Activated CD4-positive, alpha-beta memory T cell treated with anti-CD3 and anti-CD28 coated beads for 36 hours (primary cell): ENCODE measurements at regions of chr11 and their contacts with region 1.

Region 1: DNA sequence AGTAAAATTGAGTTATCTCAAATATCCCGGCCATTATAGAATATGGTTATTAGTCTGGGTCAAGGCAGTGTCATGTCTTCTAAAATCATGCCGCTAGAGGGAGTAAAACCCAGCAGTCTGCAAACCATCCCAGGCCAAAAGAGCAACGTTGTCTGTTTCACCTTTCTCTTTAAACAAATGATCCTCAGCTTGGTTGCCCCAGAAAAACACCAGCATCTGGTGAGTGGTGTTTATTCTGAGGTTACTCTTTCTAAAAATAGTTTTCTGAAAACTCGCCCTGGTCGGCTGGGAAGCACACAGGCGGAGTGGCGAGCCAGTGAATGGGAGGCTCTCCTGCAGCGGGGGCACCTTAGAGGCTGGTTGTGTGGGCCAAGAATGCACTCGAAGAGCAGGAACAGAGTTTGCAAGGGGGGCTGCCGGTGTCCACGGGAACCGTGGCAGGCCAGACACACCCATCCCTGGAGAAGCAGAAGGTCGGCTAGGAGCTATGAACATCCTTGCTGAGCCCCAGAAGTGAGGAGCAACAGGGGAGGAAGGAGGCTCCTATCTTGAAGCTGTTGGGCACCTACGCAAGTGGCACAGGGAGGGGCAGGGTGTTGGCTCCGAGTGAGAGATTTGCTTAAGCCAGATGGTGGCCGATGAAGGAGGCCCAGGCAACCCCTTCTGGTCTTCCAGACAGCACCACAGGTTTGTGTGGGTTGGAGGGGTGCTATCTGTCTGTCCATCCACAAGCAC is 297.1 kb downstream of the ETS1 start:
- DNase-seq: peak; percentile 80
- H3K4me3 Mint-ChIP-seq: peak overlapping the region; percentile 81
- H3K27ac Mint-ChIP-seq: peak overlapping the region; percentile 96
- H3K4me1 Mint-ChIP-seq: peaks cover 97% of the 10 kb centered on the region
- H3K27me3 Mint-ChIP-seq: no peaks in the 10 kb centered on the region

Region 2: GRCh38 chr11:127843483-127844396 is 446.5 kb before region 1 on chr11:
- CTCF ChIA-PET with region 1: no interaction called
- POLR2A ChIA-PET with region 1: no interaction called
- intact Hi-C with region 1: no loop called
- DNase-seq: peak; percentile 78
- H3K4me3 Mint-ChIP-seq: no peak overlapping the region
- H3K27ac Mint-ChIP-seq: no peak overlapping the region
- H3K4me1 Mint-ChIP-seq: no peaks in the 10 kb centered on the region
- H3K27me3 Mint-ChIP-seq: peaks cover 6% of the 10 kb centered on the region

Region 3: DNA sequence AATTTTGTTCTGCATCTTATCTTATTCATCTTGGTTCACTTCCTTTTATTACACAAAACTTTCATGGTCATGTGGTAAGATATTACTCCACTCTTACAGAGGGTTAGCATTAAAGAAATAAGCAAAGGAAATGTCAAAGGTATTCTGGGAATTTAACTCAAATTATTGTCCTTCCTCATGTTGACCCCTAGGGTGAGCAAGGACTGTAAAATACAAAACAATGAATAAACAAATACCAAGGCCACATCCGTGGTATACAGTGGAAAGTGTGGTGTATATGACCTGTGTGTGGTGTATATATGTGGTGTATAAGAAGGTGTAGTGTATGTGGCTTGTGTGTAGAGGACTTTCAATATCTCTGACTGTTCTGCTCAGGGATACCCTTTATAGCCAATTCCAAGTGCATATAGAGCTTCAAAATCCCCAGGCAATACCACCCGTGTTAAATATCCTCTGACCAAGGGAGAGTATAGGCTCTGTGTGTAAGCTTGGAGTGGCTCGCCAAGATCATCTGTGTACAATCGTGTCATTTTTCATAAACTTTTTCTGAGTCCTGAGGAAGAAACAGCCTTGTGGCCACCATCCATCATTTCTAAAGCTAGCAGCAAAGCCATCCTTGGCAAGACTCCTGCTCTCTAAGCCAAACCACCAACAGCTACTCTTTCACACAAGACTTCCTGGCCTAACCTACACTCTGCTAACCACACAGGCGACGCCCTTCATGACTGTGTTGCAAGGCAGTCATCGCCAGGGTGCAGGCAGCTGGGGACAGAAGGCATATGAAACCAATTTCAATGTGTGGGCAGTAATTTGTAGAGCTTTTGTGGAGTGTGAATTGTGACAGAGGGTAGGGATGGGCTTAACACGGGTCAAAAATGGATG is 250.9 kb before region 1 on chr11:
- CTCF ChIA-PET with region 1: interaction called, 3 read pairs
- POLR2A ChIA-PET with region 1: interaction called, 5 read pairs
- intact Hi-C with region 1: loop called (anchors 2 kb)
- DNase-seq: peak; percentile 90
- H3K4me3 Mint-ChIP-seq: peak overlapping the region; percentile 61
- H3K27ac Mint-ChIP-seq: peak overlapping the region; percentile 89
- H3K4me1 Mint-ChIP-seq: peaks cover 52% of the 10 kb centered on the region
- H3K27me3 Mint-ChIP-seq: no peaks in the 10 kb centered on the region

Region 4: DNA sequence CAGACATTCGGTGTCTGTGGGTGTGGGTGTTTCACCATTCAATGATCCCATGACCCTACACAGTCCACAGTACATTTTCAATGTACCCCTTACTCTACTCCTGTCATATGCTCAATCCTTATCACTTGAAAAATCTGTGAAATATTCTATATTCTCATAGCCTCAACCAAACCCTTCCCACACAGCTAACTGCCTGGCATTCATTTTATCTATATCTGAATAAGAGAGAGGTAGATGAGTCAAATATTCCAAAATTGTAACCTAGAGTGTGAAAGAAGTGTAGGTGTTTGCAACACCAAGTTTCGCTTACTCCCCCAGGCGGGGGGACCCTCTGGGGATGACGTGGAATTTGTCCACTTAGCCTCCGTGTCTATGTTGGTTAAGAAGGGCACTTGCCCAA is 57.7 kb before region 1 on chr11:
- CTCF ChIA-PET with region 1: interaction called, 6 read pairs
- POLR2A ChIA-PET with region 1: interaction called, 8 read pairs
- intact Hi-C with region 1: loop called (anchors 1 kb)
- DNase-seq: peak; percentile 85
- H3K4me3 Mint-ChIP-seq: no peak overlapping the region
- H3K27ac Mint-ChIP-seq: peak overlapping the region; percentile 69
- H3K4me1 Mint-ChIP-seq: peaks cover 52% of the 10 kb centered on the region
- H3K27me3 Mint-ChIP-seq: no peaks in the 10 kb centered on the region

Region 5: GRCh38 chr11:128328955-128329551 is 38.8 kb after region 1 on chr11:
- CTCF ChIA-PET with region 1: interaction called, 53 read pairs
- POLR2A ChIA-PET with region 1: interaction called, 66 read pairs
- intact Hi-C with region 1: loop called (anchors 1 kb)
- DNase-seq: peak; percentile 76
- H3K4me3 Mint-ChIP-seq: peak overlapping the region; percentile 21
- H3K27ac Mint-ChIP-seq: peak overlapping the region; percentile 94
- H3K4me1 Mint-ChIP-seq: peaks cover 76% of the 10 kb centered on the region
- H3K27me3 Mint-ChIP-seq: no peaks in the 10 kb centered on the region

Region 6: GRCh38 chr11:128437137-128437536 is 146.9 kb after region 1 on chr11:
- CTCF ChIA-PET with region 1: no interaction called
- POLR2A ChIA-PET with region 1: no interaction called
- intact Hi-C with region 1: no loop called
- DNase-seq: no peak
- H3K4me3 Mint-ChIP-seq: no peak overlapping the region
- H3K27ac Mint-ChIP-seq: no peak overlapping the region
- H3K4me1 Mint-ChIP-seq: peaks cover 2% of the 10 kb centered on the region
- H3K27me3 Mint-ChIP-seq: no peaks in the 10 kb centered on the region

Region 7: GRCh38 chr11:128448200-128448886 is 158.1 kb after region 1 on chr11:
- CTCF ChIA-PET with region 1: interaction called, 5 read pairs
- POLR2A ChIA-PET with region 1: interaction called, 5 read pairs
- intact Hi-C with region 1: loop called (anchors 1 kb)
- DNase-seq: no peak
- H3K4me3 Mint-ChIP-seq: no peak overlapping the region
- H3K27ac Mint-ChIP-seq: no peak overlapping the region
- H3K4me1 Mint-ChIP-seq: peaks cover 46% of the 10 kb centered on the region
- H3K27me3 Mint-ChIP-seq: no peaks in the 10 kb centered on the region

Region 8: GRCh38 chr11:128522055-128522942 is 232.0 kb after region 1 on chr11:
- CTCF ChIA-PET with region 1: interaction called, 19 read pairs
- POLR2A ChIA-PET with region 1: interaction called, 84 read pairs
- intact Hi-C with region 1: loop called (anchors 1 kb)
- DNase-seq: peak; percentile 94
- H3K4me3 Mint-ChIP-seq: peak overlapping the region; percentile 97
- H3K27ac Mint-ChIP-seq: peak overlapping the region; percentile 96
- H3K4me1 Mint-ChIP-seq: peaks cover 42% of the 10 kb centered on the region
- H3K27me3 Mint-ChIP-seq: no peaks in the 10 kb centered on the region

Region 9: GRCh38 chr11:128630367-128631230 is 340.3 kb after region 1 on chr11:
- CTCF ChIA-PET with region 1: interaction called, 92 read pairs
- POLR2A ChIA-PET with region 1: interaction called, 50 read pairs
- intact Hi-C with region 1: loop called (anchors 1 kb)
- DNase-seq: peak; percentile 94
- H3K4me3 Mint-ChIP-seq: peak overlapping the region; percentile 65
- H3K27ac Mint-ChIP-seq: peak overlapping the region; percentile 92
- H3K4me1 Mint-ChIP-seq: peaks cover 66% of the 10 kb centered on the region
- H3K27me3 Mint-ChIP-seq: no peaks in the 10 kb centered on the region